Pancreas (tissue), 10 donors: ENCODE measurements at regions of chr20 and their contacts with region 1.

Region 1: GRCh38 chr20:25048519-25048952 is 9.4 kb downstream of the ACSS1 start:
- DNase-seq: peak in 3 of 6 donors; percentile 26 to 34 (median 31)
- ATAC-seq: peak in 3 of 4 donors; percentile 9 to 44 (median 37)
- H3K4me3 ChIP-seq: no peak overlapping the region
- H3K27ac ChIP-seq: no peak overlapping the region
- H3K4me1 ChIP-seq: peaks cover 43 to 67% (median 54%) of the 10 kb centered on the region in 3 donors
- H3K27me3 ChIP-seq: no peaks in the 10 kb centered on the region
- CTCF ChIP-seq: no peak

Region 2: DNA sequence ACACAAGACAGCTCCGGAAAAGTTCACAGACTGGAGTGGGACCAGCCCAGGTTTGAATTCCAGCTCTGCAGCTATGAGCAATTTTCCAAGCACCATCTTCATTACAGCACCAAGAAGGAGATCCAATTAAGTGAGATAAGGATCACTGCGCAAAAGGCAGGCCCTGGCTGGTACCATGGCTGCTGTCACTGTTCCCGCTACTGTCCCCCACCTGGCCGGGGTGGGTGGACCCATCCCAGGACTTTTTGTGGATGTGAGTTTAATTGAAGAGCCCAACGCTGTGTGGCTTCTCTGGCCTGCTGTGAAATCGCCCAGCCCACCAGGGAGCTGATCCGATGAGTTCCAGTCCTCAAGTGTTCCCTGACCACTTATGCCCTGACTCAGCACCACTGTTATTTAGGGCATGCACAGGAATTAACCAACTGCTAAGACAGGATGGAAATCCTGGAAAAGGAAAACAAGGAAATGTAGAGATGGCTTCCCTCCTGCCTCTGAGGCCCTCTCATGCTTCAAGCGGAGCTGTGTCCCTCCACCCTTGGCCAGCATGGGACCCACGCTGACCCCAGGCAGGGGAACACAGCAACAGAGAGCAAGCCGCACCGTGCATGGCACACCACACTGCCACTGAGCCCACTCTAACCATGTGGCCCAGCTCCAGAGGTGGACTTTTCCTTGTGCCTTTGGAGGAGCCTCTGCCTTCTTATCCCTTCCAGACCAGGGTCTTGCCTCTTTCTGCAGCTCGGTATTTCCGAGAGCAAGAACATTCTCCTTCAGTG is 249.4 kb before region 1 on chr20:
- intact Hi-C with region 1: no loop called
- DNase-seq: peak in 2 of 6 donors; percentile 19 to 35
- ATAC-seq: no peak
- H3K4me3 ChIP-seq: no peak overlapping the region
- H3K27ac ChIP-seq: no peak overlapping the region
- H3K4me1 ChIP-seq: no peaks in the 10 kb centered on the region
- H3K27me3 ChIP-seq: no peaks in the 10 kb centered on the region
- CTCF ChIP-seq: no peak

Region 3: DNA sequence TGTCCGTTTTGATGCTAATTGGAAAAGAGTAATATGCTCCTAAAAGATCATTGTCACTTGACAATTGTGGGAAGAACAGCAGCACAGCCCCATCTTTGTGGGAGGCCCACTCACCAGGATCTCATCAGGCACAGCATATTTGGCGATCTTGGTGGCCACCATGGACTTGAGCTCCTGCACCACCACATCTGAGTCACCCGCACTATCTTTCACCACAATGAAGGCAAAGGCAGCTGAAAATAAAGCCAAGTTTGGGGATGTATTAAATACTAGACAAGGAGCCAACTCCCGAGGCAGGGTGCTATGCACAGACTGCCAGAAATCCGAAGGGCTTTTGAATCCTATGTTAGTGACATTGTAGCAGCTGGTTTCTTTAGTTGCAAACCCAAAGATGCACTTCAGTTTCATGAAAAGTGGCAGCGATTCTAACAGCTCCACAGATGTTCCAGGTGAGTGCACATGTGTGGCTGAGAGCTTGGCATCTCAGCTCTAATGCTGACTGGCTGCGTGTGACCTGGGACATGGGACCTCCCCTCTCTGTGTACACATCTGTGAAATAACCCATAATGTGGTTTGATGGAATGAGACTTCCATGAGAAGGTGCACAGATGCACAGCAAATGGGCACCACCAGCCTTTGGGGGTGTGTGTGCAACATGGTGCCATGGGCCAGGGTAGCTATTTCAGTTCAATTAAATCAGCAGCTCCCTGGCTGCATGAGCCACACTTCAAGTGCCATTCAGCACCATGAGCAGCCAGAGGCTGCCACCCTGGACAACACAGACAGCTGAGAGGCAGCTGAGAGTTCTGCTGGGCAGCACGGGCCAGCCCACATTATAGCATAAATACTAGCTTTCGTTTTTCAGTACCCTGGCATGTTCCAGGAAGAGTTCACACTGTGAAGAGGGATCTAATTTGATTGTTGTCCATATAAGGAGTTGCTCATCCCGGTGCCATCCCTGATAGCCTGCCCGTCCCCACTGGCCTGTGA is 39.1 kb before region 1 on chr20:
- intact Hi-C with region 1: loop called in 1 of 3 experiments (anchors 5 kb)
- DNase-seq: peak in 3 of 6 donors; percentile 37 to 59 (median 58)
- ATAC-seq: peak; percentile 37 to 73 (median 65)
- H3K4me3 ChIP-seq: no peak overlapping the region
- H3K27ac ChIP-seq: no peak overlapping the region
- H3K4me1 ChIP-seq: peaks cover 4 to 10% (median 8%) of the 10 kb centered on the region in 3 donors
- H3K27me3 ChIP-seq: no peaks in the 10 kb centered on the region
- CTCF ChIP-seq: no peak

Region 4: GRCh38 chr20:25309395-25310267 is 261.1 kb after region 1 on chr20:
- intact Hi-C with region 1: no loop called
- DNase-seq: peak in 2 of 6 donors; percentile 39 to 58
- ATAC-seq: peak; percentile 48 to 77 (median 60)
- H3K4me3 ChIP-seq: no peak overlapping the region
- H3K27ac ChIP-seq: peak overlapping the region in 2 of 4 donors; percentile 47 to 52
- H3K4me1 ChIP-seq: peaks cover 0 to 9% (median 0%) of the 10 kb centered on the region in 3 donors
- H3K27me3 ChIP-seq: no peaks in the 10 kb centered on the region
- CTCF ChIP-seq: no peak